Astrocyte of the cerebellum (primary cell): ENCODE measurements at regions of chr11 and their contacts with region 1.

Region 1: GRCh38 chr11:65213322-65214211 is 31.8 kb downstream of the CAPN1 start:
- DNase-seq: no peak
- H3K4me3 ChIP-seq: no peak overlapping the region
- CTCF ChIP-seq: no peak

Region 2: GRCh38 chr11:65134386-65135253 is 78.9 kb before region 1 on chr11 and contains the start of gene SYVN1:
- in situ Hi-C with region 1: no loop called
- DNase-seq: peak; percentile 94
- H3K4me3 ChIP-seq: peak within 1 kb of the TSS; percentile 78
- CTCF ChIP-seq: no peak

Region 3: GRCh38 chr11:65251476-65251875 is 37.9 kb after region 1 on chr11:
- in situ Hi-C with region 1: loop called (anchors 5 kb)
- DNase-seq: no peak
- H3K4me3 ChIP-seq: no peak overlapping the region
- CTCF ChIP-seq: no peak

Region 4: GRCh38 chr11:65274735-65275682 is 61.4 kb after region 1 on chr11:
- in situ Hi-C with region 1: loop called (anchors 5 kb)
- DNase-seq: peak; percentile 76
- H3K4me3 ChIP-seq: no peak overlapping the region
- CTCF ChIP-seq: peak; percentile 73

Region 5: GRCh38 chr11:65287601-65288000 is 74.0 kb after region 1 on chr11:
- in situ Hi-C with region 1: no loop called
- DNase-seq: no peak
- H3K4me3 ChIP-seq: no peak overlapping the region
- CTCF ChIP-seq: no peak

Region 6: DNA sequence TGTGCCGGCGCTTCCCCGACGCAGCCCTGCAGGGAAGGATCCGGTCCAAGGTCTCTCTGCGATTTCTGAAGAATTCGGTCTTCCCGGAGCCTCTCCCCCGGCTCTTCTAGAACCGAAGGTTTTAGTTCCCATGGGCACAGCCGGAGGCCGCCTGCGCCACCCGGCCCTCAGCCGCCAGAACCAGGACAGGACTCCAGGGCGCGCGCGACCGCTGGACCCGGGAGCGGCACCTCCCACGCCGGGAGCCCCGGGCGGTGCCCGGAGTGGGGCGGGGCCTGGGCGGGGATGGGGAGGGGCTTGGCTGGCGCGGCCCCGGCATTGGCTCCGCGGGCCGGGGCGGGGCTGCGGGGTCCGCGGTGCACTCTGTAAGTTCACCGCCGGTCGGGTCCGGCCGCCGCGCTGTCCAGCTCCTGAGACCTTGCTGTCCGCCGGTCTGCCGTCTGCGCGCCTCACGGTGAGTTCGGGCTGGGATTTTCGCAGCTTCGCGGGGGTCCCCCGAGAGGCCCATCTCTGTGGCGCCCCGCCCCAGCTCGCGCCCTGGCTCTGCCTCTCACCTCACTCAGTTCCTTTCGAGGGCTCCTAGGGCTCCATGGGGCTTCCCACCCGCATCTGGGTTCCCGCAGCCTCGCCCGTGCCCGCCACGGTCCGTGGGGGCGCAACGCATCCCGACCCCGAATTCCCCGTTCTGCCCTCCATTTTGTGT is 101.1 kb after region 1 on chr11 and contains the start of gene CDC42EP2:
- in situ Hi-C with region 1: no loop called
- DNase-seq: no peak
- H3K4me3 ChIP-seq: peak within 1 kb of the TSS; percentile 88
- CTCF ChIP-seq: no peak